ENCODE measurements at regions of chr6 and their contacts with region 1.

Region 1: GRCh38 chr6:36075656-36076055 is 48.0 kb downstream of the MAPK14 start:
- DNase-seq: peak; percentile 6
- ATAC-seq: peak; percentile 77
- H3K4me3 ChIP-seq: no peak overlapping the region
- H3K27ac ChIP-seq: no peak overlapping the region
- H3K4me1 ChIP-seq: no peaks in the 10 kb centered on the region
- H3K27me3 ChIP-seq: no peaks in the 10 kb centered on the region
- CTCF ChIP-seq: peak in 2 of 3 experiments; percentile 55 to 60; a peak in 4 of 6 replicates
- POLR2A ChIP-seq: no peak
- RAD21 ChIP-seq: 0 out of 2 replicates have a peak, but pooled peaks have one; percentile 22

Region 2: DNA sequence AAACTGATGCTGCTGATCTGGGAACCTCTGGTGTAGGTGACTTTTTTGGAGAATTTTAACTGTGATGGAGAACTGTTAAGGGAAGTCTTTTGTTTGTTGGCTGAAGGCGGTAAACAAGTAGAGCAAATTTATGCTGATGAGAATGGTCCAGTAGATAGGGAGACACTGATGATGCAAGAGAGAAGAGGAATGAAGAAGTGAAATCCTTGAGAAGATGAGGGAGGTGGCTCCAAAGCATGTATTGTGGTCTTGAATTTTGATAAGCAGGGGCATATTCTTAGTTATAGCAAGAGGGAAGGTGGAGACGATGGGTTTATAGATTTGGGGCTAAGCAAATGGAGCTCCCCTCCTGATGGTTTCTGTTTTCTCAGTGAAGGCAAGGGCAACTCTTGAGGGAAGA is 26.1 kb before region 1 on chr6:
- CTCF ChIA-PET with region 1: interaction called, 3 read pairs
- POLR2A ChIA-PET with region 1: no interaction called
- RAD21 ChIA-PET with region 1: no interaction called
- intact Hi-C with region 1: loop called (anchors 2 kb)
- DNase-seq: no peak
- ATAC-seq: no peak
- H3K4me3 ChIP-seq: no peak overlapping the region
- H3K27ac ChIP-seq: no peak overlapping the region
- H3K4me1 ChIP-seq: peaks cover 0 to 4% of the 10 kb centered on the region in 2 experiments; a peak in 1 of 4 replicates
- H3K27me3 ChIP-seq: no peaks in the 10 kb centered on the region
- CTCF ChIP-seq: no peak
- POLR2A ChIP-seq: no peak
- RAD21 ChIP-seq: no peak

Region 3: DNA sequence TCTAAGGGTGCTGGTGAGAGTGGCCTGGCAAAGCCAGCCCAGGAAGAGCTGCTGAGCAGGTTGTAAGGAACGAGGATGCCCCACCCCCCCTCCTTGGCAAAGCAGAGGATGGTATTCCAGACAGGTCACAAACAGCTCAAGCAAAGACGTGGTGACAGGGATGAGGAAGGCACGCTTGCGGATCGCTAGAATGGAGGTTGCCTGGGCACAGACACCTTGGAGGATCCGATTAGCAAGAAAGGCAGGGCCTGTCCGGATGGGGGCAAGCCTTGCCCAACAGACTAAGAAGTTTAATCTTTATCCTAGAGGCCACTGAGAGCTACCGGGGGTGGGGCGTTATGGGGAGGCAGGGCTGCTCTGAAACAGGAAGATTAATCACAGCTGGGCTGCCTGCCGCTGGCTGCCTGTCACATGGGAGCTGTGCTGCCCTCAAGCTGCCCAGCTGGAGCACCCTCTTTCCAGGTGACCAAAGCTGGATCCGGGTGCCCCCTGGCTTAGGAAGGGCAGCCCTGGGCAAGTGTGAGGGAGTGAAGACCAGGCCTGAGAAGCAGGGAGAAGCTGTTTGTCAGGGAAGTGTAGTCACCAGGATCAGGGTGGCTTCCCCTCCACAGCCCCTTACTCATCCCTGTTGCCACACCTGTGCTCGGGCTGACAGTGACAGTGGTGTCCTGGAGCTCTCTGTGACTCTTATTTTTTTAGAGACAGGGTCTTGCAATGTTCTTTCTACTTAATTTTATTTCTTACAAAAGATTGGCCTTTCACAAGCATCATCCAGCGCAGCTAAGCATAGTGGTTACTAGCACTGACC is 45.5 kb after region 1 on chr6:
- CTCF ChIA-PET with region 1: no interaction called
- POLR2A ChIA-PET with region 1: no interaction called
- RAD21 ChIA-PET with region 1: no interaction called
- intact Hi-C with region 1: no loop called
- DNase-seq: no peak
- ATAC-seq: no peak
- H3K4me3 ChIP-seq: no peak overlapping the region
- H3K27ac ChIP-seq: no peak overlapping the region
- H3K4me1 ChIP-seq: peaks cover 9 to 22% of the 10 kb centered on the region in 2 experiments; a peak in 2 of 4 replicates
- H3K27me3 ChIP-seq: no peaks in the 10 kb centered on the region
- CTCF ChIP-seq: no peak
- POLR2A ChIP-seq: no peak
- RAD21 ChIP-seq: no peak

Measured in HCT116 (cell line).